Natural killer cell (primary cell): ENCODE measurements at regions of chr3 and their contacts with region 1.

Region 1: DNA sequence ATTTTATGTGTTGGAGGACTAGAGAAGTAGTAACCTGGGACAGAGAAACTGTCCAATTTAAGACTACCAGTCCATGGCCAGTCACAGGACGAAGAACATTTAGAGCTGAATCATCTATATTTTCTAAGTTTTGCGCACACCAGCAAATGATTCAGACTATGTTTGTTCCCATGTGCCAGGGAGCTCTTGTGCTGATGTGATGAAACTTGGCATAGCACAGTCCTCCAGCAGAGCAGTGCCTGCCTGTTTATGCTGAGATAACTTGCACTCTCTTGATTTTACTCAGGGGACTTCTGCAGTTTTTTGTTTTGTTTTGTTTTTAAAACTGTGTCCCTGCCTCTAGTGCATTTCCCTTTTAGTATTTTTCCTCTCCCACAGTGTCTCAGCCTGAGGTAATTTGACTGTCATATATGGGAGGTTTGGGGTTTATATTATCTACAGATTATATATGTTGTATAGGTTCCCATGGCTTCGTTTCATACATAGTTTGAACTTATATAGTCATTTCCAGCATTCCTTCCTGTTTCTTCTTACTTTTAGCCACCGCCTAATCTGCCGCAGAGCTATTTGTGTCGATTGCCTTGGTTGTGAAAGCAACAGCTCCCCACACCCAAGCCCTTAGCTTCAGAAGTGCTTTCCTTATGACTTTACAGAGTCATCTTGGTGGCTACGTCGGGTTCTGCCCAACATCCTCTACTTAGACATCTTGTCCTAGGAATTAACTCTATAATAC is 45.5 kb downstream of the PPM1L start:
- DNase-seq: peak; percentile 38 to 50
- ATAC-seq: peak; percentile 89 to 92 (median 91)
- H3K4me3 ChIP-seq: no peak overlapping the region
- H3K4me3 Mint-ChIP-seq: peak overlapping the region; percentile 93
- H3K27ac ChIP-seq: peak overlapping the region; percentile 66
- H3K27ac Mint-ChIP-seq: peak overlapping the region; percentile 92 to 97
- H3K4me1 ChIP-seq: peaks cover 21% of the 10 kb centered on the region
- H3K4me1 Mint-ChIP-seq: peaks cover 58 to 68% of the 10 kb centered on the region in 2 donors
- H3K27me3 ChIP-seq: no peaks in the 10 kb centered on the region
- H3K27me3 Mint-ChIP-seq: no peaks in the 10 kb centered on the region
- CTCF ChIP-seq: no peak

Region 2: GRCh38 chr3:160754855-160755747 is 46.5 kb before region 1 on chr3:
- intact Hi-C with region 1: loop called (anchors 5 kb)
- DNase-seq: peak; percentile 81 to 94
- ATAC-seq: peak; percentile 83 to 93 (median 84)
- H3K4me3 ChIP-seq: peak overlapping the region; percentile 93
- H3K4me3 Mint-ChIP-seq: peak overlapping the region; percentile 97
- H3K27ac ChIP-seq: peak overlapping the region; percentile 78
- H3K27ac Mint-ChIP-seq: peak overlapping the region; percentile 91 to 92
- H3K4me1 ChIP-seq: peaks cover 28% of the 10 kb centered on the region
- H3K4me1 Mint-ChIP-seq: peaks cover 52 to 54% of the 10 kb centered on the region in 2 donors
- H3K27me3 ChIP-seq: no peaks in the 10 kb centered on the region
- H3K27me3 Mint-ChIP-seq: no peaks in the 10 kb centered on the region
- CTCF ChIP-seq: no peak

Region 3: DNA sequence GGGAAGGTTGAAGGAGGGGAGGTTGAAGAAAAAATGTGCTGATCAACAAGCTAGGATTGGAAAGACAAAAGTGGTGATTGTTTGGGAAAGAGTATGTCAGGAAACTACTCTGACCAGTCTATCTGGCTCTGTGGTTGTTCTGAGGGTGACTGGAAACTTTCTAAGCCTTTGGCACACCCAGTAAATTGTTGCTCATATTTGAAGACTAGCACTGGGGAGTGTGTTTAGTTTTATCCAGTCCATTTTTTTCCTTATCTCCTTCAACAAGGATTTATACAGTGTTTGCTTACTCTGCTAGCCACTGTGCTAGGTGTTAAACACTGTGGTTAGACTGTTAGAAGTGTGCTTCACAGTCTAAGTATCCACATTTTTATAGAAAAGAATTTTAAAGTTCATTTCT is 16.7 kb before region 1 on chr3:
- intact Hi-C with region 1: loop called (anchors 2 kb)
- DNase-seq: no peak
- ATAC-seq: peak; percentile 71 to 86 (median 77)
- H3K4me3 ChIP-seq: no peak overlapping the region
- H3K4me3 Mint-ChIP-seq: peak overlapping the region; percentile 3
- H3K27ac ChIP-seq: no peak overlapping the region
- H3K27ac Mint-ChIP-seq: no peak overlapping the region
- H3K4me1 ChIP-seq: peaks cover 5% of the 10 kb centered on the region
- H3K4me1 Mint-ChIP-seq: peaks cover 59 to 62% of the 10 kb centered on the region in 2 donors
- H3K27me3 ChIP-seq: no peaks in the 10 kb centered on the region
- H3K27me3 Mint-ChIP-seq: no peaks in the 10 kb centered on the region
- CTCF ChIP-seq: no peak

Region 4: GRCh38 chr3:160837394-160837980 is 35.9 kb after region 1 on chr3:
- intact Hi-C with region 1: loop called (anchors 5 kb)
- DNase-seq: peak in 1 of 2 donors; percentile 15
- ATAC-seq: peak; percentile 76 to 86 (median 80)
- H3K4me3 ChIP-seq: no peak overlapping the region
- H3K4me3 Mint-ChIP-seq: peak overlapping the region; percentile 78
- H3K27ac ChIP-seq: peak overlapping the region; percentile 70
- H3K27ac Mint-ChIP-seq: peak overlapping the region; percentile 87 to 91
- H3K4me1 ChIP-seq: peaks cover 14% of the 10 kb centered on the region
- H3K4me1 Mint-ChIP-seq: peaks cover 75 to 93% of the 10 kb centered on the region in 2 donors
- H3K27me3 ChIP-seq: no peaks in the 10 kb centered on the region
- H3K27me3 Mint-ChIP-seq: no peaks in the 10 kb centered on the region
- CTCF ChIP-seq: no peak

Region 5: GRCh38 chr3:160956806-160957205 is 155.3 kb after region 1 on chr3:
- intact Hi-C with region 1: no loop called
- DNase-seq: peak in 1 of 2 donors; percentile 8
- ATAC-seq: peak in 1 of 3 donors; percentile 59
- H3K4me3 ChIP-seq: no peak overlapping the region
- H3K4me3 Mint-ChIP-seq: no peak overlapping the region
- H3K27ac ChIP-seq: no peak overlapping the region
- H3K27ac Mint-ChIP-seq: no peak overlapping the region
- H3K4me1 ChIP-seq: no peaks in the 10 kb centered on the region
- H3K4me1 Mint-ChIP-seq: peaks cover 6 to 10% of the 10 kb centered on the region in 2 donors
- H3K27me3 ChIP-seq: no peaks in the 10 kb centered on the region
- H3K27me3 Mint-ChIP-seq: no peaks in the 10 kb centered on the region
- CTCF ChIP-seq: peak; percentile 11

Region 6: DNA sequence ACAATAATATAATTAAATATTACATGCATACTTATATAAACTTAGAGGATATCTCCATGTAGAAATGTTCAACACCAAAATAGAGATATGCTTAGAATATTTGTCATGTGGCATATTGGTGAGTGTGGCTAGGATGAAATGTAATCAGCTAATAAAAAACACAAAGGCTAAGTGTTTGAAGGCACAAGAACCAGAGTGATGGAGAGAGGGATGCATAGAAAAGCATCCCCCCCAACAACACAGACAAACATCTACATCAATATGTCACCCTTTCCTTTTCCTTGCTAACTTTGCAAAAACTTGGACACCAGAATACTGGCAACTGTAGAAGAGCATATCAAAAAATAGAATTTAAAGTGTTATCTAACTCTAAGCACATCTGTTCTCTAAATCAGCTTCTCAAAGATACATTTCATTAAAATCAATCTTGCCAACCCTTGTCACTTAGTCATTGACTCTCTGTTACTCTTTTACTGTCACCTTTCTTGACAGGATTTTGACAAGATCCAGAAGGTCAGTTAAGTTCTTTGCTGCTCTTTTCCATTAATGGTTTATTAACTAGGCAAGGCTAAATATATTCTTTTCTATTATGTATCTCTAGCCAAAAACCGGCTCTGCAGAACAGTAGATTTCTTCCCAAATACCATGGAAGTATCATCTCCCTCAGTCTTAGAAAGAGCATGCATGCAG is 1390.9 kb after region 1 on chr3:
- intact Hi-C with region 1: no loop called
- DNase-seq: no peak
- ATAC-seq: no peak
- H3K4me3 ChIP-seq: no peak overlapping the region
- H3K4me3 Mint-ChIP-seq: no peak overlapping the region
- H3K27ac ChIP-seq: no peak overlapping the region
- H3K27ac Mint-ChIP-seq: no peak overlapping the region
- H3K4me1 ChIP-seq: no peaks in the 10 kb centered on the region
- H3K4me1 Mint-ChIP-seq: no peaks in the 10 kb centered on the region
- H3K27me3 ChIP-seq: no peaks in the 10 kb centered on the region
- H3K27me3 Mint-ChIP-seq: no peaks in the 10 kb centered on the region
- CTCF ChIP-seq: no peak